Mammary epithelial cell (primary cell): ENCODE measurements at regions of chr11 and their contacts with region 1.

Region 1: GRCh38 chr11:100682247-100682969 is 4.7 kb upstream of the ARHGAP42 start:
- DNase-seq: peak; percentile 24
- H3K4me3 ChIP-seq: no peak overlapping the region
- H3K27ac ChIP-seq: no peak overlapping the region
- H3K4me1 ChIP-seq: peaks cover 32% of the 10 kb centered on the region
- H3K27me3 ChIP-seq: no peaks in the 10 kb centered on the region
- CTCF ChIP-seq: peak; percentile 29 to 53

Region 2: DNA sequence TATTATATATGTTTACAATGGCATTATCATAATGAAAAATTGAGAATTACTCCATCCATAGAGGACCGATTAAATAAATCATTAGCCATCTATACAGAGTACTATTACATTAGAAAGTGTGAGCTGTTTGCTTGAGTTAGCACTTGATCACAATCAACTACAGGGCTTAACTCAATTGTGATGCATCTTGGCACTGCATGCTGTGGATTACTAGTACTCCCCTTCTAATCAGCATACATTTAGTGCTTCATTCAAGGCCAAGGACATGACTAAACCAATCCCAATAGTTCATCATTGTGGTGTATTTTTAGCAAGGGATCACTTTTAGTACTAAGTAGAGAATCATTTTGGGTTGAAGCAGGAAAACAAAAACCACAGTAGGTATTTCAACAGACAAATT is 18.8 kb before region 1 on chr11:
- CTCF ChIA-PET with region 1: interaction called, 19 read pairs
- dilution Hi-C with region 1: no loop called
- in situ Hi-C with region 1: no loop called
- intact Hi-C with region 1: no loop called
- DNase-seq: no peak
- H3K4me3 ChIP-seq: no peak overlapping the region
- H3K27ac ChIP-seq: no peak overlapping the region
- H3K4me1 ChIP-seq: no peaks in the 10 kb centered on the region
- H3K27me3 ChIP-seq: no peaks in the 10 kb centered on the region
- CTCF ChIP-seq: no peak

Region 3: GRCh38 chr11:100712583-100712982 is 30.2 kb after region 1 on chr11:
- CTCF ChIA-PET with region 1: no interaction called
- dilution Hi-C with region 1: no loop called
- in situ Hi-C with region 1: no loop called
- intact Hi-C with region 1: no loop called
- DNase-seq: no peak
- H3K4me3 ChIP-seq: no peak overlapping the region
- H3K27ac ChIP-seq: no peak overlapping the region
- H3K4me1 ChIP-seq: no peaks in the 10 kb centered on the region
- H3K27me3 ChIP-seq: no peaks in the 10 kb centered on the region
- CTCF ChIP-seq: no peak

Region 4: DNA sequence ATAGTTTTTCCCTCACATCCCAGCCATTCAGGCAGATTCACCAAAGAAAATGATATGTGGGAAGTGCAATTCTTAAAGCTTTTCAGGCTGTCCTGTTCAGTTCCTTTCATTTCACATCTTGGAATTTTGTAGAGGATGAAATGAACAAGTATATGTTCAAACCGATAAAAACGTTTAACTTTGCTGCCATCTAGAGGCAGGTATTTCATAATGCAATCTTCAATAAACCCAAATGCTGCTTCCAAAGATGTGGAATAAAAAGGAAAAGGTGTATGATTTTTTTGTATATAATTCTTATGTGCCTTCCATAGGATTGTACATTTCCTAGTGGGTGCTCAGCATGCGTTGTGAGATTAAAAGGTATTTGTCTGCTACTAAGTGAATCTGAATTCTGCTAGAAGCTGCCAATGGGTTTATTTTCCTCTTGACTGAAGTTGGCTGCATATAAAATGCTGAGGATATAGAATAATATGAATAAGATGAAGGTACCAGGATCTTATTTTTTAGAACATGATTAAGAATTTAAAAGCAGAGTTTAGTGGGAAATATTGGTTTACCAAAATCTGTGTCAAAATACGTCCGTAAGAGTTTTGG is 247.9 kb after region 1 on chr11:
- CTCF ChIA-PET with region 1: no interaction called
- dilution Hi-C with region 1: no loop called
- in situ Hi-C with region 1: no loop called
- intact Hi-C with region 1: loop called (anchors 1 kb)
- DNase-seq: peak; percentile 50
- H3K4me3 ChIP-seq: no peak overlapping the region
- H3K27ac ChIP-seq: peak overlapping the region; percentile 58
- H3K4me1 ChIP-seq: peaks cover 17% of the 10 kb centered on the region
- H3K27me3 ChIP-seq: no peaks in the 10 kb centered on the region
- CTCF ChIP-seq: peak; percentile 61 to 64